ENCODE measurements at regions of chr1 and their contacts with region 1.

Region 1: GRCh38 chr1:59139396-59139795 is 157.5 kb upstream of the FGGY start:
- DNase-seq: no peak
- H3K4me3 ChIP-seq: no peak overlapping the region
- H3K27ac ChIP-seq: no peak overlapping the region
- H3K4me1 ChIP-seq: peaks cover 2% of the 10 kb centered on the region
- H3K27me3 ChIP-seq: no peaks in the 10 kb centered on the region
- CTCF ChIP-seq: no peak
- EP300 ChIP-seq: no peak
- POLR2A ChIP-seq: no peak

Region 2: GRCh38 chr1:59083946-59084865 is 55.2 kb before region 1 on chr1:
- intact Hi-C with region 1: loop called in 1 of 4 experiments (anchors 10 kb)
- DNase-seq: peak in 1 of 5 donors; percentile 40
- H3K4me3 ChIP-seq: no peak overlapping the region
- H3K27ac ChIP-seq: no peak overlapping the region
- H3K4me1 ChIP-seq: no peaks in the 10 kb centered on the region
- H3K27me3 ChIP-seq: no peaks in the 10 kb centered on the region
- CTCF ChIP-seq: no peak
- EP300 ChIP-seq: no peak
- POLR2A ChIP-seq: no peak

Region 3: GRCh38 chr1:59543211-59543668 is 403.8 kb after region 1 on chr1:
- intact Hi-C with region 1: no loop called
- DNase-seq: no peak
- H3K4me3 ChIP-seq: no peak overlapping the region
- H3K27ac ChIP-seq: no peak overlapping the region
- H3K4me1 ChIP-seq: no peaks in the 10 kb centered on the region
- H3K27me3 ChIP-seq: no peaks in the 10 kb centered on the region
- CTCF ChIP-seq: no peak
- EP300 ChIP-seq: no peak
- POLR2A ChIP-seq: no peak

Measured in ovary (tissue), 10 donors.